SK-N-SH (cell line): ENCODE measurements at regions of chr17 and their contacts with region 1.

Region 1: DNA sequence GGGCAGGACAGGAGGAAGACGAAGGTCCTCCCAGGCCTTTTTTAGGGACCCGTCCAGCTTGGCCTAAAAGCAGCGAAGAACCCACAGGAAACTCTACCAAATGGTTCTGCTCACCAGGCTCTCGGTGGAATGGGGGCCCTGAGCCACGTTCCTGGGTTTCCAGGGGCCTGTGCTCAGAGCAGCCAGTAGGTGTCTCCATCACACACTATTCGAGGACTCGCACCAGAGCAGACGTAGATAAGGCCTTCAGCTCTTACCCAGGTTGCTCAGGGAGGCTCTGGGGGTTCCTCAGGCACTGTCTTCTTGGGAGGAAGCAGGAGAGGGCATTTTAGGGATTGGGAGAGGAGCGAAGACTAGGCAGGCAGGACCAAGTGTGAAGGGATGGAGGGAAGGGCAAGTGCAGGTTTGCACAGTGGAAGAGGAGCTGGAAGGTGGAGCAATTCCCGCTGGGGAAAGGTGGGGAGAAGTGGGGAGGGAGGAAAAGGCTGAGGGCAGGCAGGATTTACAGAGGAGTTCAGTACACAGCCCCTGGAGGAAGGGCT is 157.1 kb downstream of the RGS9 start:
- DNase-seq: peak; percentile 87
- H3K4me3 ChIP-seq: no peak overlapping the region; a peak in 1 of 4 replicates
- H3K27ac ChIP-seq: no peak overlapping the region
- H3K4me1 ChIP-seq: peaks cover 0 to 2% of the 10 kb centered on the region in 2 experiments; a peak in 1 of 4 replicates
- H3K27me3 ChIP-seq: no peaks in the 10 kb centered on the region
- CTCF ChIP-seq: peak; percentile 93
- EP300 ChIP-seq: no peak
- RAD21 ChIP-seq: peak; percentile 98

Region 2: GRCh38 chr17:65039336-65039988 is 254.8 kb before region 1 on chr17:
- CTCF ChIA-PET with region 1: no interaction called
- POLR2A ChIA-PET with region 1: no interaction called
- DNase-seq: no peak
- H3K4me3 ChIP-seq: no peak overlapping the region
- H3K27ac ChIP-seq: no peak overlapping the region
- H3K4me1 ChIP-seq: peaks cover 0 to 7% of the 10 kb centered on the region in 2 experiments; a peak in 2 of 4 replicates
- H3K27me3 ChIP-seq: no peaks in the 10 kb centered on the region
- CTCF ChIP-seq: no peak
- EP300 ChIP-seq: no peak
- RAD21 ChIP-seq: no peak

Region 3: GRCh38 chr17:65307081-65307960 is 13.1 kb after region 1 on chr17:
- CTCF ChIA-PET with region 1: interaction called, 21 read pairs
- POLR2A ChIA-PET with region 1: no interaction called
- DNase-seq: no peak
- H3K4me3 ChIP-seq: no peak overlapping the region
- H3K27ac ChIP-seq: no peak overlapping the region
- H3K4me1 ChIP-seq: no peaks in the 10 kb centered on the region
- H3K27me3 ChIP-seq: peaks cover 30% of the 10 kb centered on the region; the same call in 1 of the 2 replicates
- CTCF ChIP-seq: no peak
- EP300 ChIP-seq: no peak
- RAD21 ChIP-seq: no peak

Region 4: DNA sequence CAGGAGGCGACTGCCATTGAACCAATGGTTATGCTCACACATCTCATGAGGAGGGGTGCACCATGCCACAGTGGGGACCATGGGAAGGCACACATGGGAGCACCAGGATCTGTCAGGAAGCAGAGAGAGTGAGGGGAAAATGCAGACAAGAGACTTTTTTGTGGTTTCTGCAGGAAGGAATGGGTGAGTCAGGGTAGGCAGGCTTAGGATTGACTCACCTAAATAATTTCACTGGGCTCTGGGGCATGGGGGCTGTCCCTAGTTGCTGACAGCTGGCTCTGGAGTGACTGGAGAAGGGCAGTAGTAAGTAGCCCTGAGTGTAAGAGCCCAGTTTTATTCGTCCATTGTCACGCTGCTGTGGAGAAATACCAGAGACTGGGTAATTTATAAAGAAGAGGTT is 64.8 kb after region 1 on chr17:
- CTCF ChIA-PET with region 1: no interaction called
- POLR2A ChIA-PET with region 1: no interaction called
- DNase-seq: no peak
- H3K4me3 ChIP-seq: no peak overlapping the region
- H3K27ac ChIP-seq: no peak overlapping the region
- H3K4me1 ChIP-seq: no peaks in the 10 kb centered on the region; a peak in 1 of 4 replicates
- H3K27me3 ChIP-seq: no peaks in the 10 kb centered on the region
- CTCF ChIP-seq: no peak
- EP300 ChIP-seq: no peak
- RAD21 ChIP-seq: no peak

Region 5: DNA sequence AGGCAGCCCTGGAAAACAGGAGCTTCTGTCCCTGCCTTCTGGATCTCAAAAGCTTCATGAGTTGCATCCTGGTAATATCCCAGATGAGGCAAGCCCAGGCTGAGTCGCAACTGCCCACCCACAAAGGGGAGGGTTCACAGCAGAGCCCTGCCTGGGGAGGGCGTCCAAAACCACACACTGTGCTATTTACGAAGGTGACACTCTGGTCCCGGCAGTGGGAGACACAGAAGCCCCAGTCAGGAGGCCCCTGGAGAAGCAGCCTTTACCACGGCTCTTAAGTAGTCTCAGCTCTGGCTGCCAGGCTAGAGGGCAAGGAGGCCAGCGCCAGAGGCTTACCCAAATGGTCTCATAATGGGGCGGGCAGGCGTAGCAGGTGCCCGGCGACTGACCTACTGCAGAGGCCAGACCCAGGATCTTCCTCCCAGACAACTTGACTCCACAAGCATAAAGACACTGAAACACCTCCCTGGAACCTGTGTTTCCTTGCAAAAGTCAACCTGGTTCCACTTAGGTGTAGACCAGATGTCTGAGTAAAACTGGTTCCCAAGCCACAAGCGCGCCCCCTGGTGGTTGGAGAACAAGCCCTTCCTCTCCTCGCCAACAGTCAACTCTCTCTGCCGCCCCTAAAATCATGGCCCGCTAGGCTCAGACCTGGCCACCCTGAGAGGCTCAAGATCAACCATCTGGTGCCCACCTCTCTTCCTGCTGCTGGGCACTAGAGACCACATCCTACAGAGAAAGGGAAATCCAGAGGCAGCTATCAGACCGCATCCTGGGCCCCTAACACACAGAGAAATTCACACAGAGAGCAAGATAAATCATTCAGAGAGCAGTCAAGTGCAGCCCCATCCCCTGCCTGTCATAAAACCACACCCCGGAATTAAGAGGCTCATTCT is 262.0 kb after region 1 on chr17:
- CTCF ChIA-PET with region 1: interaction called, 68 read pairs
- POLR2A ChIA-PET with region 1: no interaction called
- DNase-seq: peak; percentile 81
- H3K4me3 ChIP-seq: peak overlapping the region in 1 of 2 experiments; percentile 24; a peak in 1 of 4 replicates
- H3K27ac ChIP-seq: no peak overlapping the region
- H3K4me1 ChIP-seq: peaks cover 13 to 24% of the 10 kb centered on the region in 2 experiments; a peak in 3 of 4 replicates
- H3K27me3 ChIP-seq: no peaks in the 10 kb centered on the region
- CTCF ChIP-seq: peak; percentile 95
- EP300 ChIP-seq: no peak
- RAD21 ChIP-seq: peak; percentile 74

Region 6: GRCh38 chr17:66152756-66153155 is 858.5 kb after region 1 on chr17:
- CTCF ChIA-PET with region 1: interaction called, 10 read pairs
- POLR2A ChIA-PET with region 1: no interaction called
- DNase-seq: no peak
- H3K4me3 ChIP-seq: no peak overlapping the region
- H3K27ac ChIP-seq: no peak overlapping the region
- H3K4me1 ChIP-seq: no peaks in the 10 kb centered on the region
- H3K27me3 ChIP-seq: no peaks in the 10 kb centered on the region
- CTCF ChIP-seq: no peak
- EP300 ChIP-seq: no peak
- RAD21 ChIP-seq: no peak